Thyroid gland (tissue), 4 donors: ENCODE measurements at regions of chr11 and their contacts with region 1.

Region 1: GRCh38 chr11:78212586-78213371 is 24.1 kb downstream of the USP35 start:
- DNase-seq: no peak
- H3K4me3 ChIP-seq: no peak overlapping the region
- H3K27ac ChIP-seq: no peak overlapping the region
- H3K4me1 ChIP-seq: no peaks in the 10 kb centered on the region
- H3K27me3 ChIP-seq: no peaks in the 10 kb centered on the region
- CTCF ChIP-seq: no peak
- POLR2A ChIP-seq: no peak

Region 2: GRCh38 chr11:78564490-78565467 is 352.0 kb after region 1 on chr11:
- intact Hi-C with region 1: loop called (anchors 10 kb)
- DNase-seq: peak in 1 of 2 donors; percentile 5
- H3K4me3 ChIP-seq: no peak overlapping the region
- H3K27ac ChIP-seq: no peak overlapping the region
- H3K4me1 ChIP-seq: no peaks in the 10 kb centered on the region
- H3K27me3 ChIP-seq: no peaks in the 10 kb centered on the region
- CTCF ChIP-seq: peak; percentile 38 to 80 (median 66)
- POLR2A ChIP-seq: no peak